ENCODE measurements at regions of chr16 and their contacts with region 1.

Region 1: GRCh38 chr16:66406534-66407221 is 20.4 kb upstream of the BEAN1 start:
- DNase-seq: peak; percentile 78
- H3K4me3 Mint-ChIP-seq: peak overlapping the region; percentile 80
- H3K27ac Mint-ChIP-seq: peak overlapping the region; percentile 38
- H3K4me1 Mint-ChIP-seq: peaks cover 17% of the 10 kb centered on the region
- H3K27me3 Mint-ChIP-seq: peaks cover 14% of the 10 kb centered on the region

Region 2: DNA sequence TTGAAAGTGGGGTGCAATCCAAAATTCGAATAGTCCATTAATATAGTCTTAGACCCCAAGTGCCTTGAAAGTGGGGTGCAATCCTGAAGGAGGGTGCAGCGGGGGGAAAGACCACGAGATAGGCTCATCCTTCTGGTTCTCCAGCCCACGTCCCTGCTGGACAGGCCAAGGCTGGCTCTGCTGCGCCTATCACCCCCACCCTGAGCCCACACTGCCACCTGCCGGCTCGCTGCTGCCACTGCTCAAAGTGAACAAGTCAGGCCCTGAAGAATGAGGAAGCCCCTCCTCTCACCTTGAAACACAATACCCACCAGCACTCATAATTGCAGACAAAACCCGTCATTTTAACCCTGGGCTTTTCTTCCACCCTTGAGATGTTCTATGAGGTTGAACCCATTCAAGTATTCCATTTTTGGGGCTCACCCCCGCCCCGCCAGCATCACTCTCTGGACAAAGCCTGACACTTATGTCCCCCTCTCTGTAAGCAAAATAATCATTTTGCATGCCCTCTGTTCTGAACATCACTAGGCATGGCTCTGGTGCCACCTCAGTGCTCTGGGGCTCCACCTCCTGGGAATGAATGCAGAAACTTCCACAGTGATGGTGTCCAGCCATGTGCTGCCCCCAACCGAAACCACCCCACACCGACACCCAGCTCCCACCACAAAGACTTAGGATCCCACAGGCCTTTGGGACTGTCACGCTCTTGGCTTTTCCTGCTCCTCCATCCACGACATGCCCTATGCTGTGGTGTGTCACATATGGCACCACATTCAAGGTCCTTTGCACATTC is 77.2 kb after region 1 on chr16:
- intact Hi-C with region 1: loop called (anchors 1 kb)
- DNase-seq: peak; percentile 58
- H3K4me3 Mint-ChIP-seq: no peak overlapping the region
- H3K27ac Mint-ChIP-seq: no peak overlapping the region
- H3K4me1 Mint-ChIP-seq: peaks cover 17% of the 10 kb centered on the region
- H3K27me3 Mint-ChIP-seq: no peaks in the 10 kb centered on the region

Region 3: DNA sequence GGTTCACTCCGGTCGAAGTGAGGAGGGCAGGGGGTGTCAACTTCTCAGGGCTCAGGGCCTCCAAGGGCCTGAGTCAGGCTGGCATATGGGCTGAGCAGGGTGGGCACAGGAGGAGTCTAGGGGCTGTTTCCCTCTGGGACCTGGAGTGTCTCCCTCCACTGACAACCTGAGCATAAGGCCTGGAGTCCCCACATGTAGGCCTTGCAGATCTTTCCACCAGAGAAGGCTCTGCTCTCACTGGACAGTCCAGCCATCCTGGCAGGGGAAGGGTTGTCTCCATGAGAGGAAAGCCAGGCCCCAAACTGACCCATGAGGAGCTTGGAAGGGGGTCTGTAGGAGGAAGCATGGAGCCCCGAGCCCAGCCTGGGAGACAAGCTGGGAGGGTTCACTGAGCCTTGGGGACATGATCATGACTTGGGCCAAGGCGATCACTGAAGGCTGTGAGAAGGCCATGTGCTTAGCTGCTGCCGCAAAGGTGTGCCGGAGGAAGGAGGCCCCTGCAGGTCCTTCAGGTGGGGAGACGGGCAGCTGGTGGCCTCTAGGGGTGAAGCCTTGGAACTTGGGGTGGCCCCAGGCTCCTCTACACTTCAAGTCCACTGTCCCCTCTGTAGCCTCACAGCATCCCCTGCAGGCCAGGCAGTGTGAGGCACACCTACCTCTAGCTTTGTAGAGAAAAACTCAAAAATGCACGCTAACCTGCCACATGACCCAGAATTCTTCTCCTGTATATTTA is 182.5 kb after region 1 on chr16:
- intact Hi-C with region 1: loop called (anchors 1 kb)
- DNase-seq: peak; percentile 55
- H3K4me3 Mint-ChIP-seq: peak overlapping the region; percentile 72
- H3K27ac Mint-ChIP-seq: peak overlapping the region; percentile 59
- H3K4me1 Mint-ChIP-seq: peaks cover 35% of the 10 kb centered on the region
- H3K27me3 Mint-ChIP-seq: no peaks in the 10 kb centered on the region

Region 4: DNA sequence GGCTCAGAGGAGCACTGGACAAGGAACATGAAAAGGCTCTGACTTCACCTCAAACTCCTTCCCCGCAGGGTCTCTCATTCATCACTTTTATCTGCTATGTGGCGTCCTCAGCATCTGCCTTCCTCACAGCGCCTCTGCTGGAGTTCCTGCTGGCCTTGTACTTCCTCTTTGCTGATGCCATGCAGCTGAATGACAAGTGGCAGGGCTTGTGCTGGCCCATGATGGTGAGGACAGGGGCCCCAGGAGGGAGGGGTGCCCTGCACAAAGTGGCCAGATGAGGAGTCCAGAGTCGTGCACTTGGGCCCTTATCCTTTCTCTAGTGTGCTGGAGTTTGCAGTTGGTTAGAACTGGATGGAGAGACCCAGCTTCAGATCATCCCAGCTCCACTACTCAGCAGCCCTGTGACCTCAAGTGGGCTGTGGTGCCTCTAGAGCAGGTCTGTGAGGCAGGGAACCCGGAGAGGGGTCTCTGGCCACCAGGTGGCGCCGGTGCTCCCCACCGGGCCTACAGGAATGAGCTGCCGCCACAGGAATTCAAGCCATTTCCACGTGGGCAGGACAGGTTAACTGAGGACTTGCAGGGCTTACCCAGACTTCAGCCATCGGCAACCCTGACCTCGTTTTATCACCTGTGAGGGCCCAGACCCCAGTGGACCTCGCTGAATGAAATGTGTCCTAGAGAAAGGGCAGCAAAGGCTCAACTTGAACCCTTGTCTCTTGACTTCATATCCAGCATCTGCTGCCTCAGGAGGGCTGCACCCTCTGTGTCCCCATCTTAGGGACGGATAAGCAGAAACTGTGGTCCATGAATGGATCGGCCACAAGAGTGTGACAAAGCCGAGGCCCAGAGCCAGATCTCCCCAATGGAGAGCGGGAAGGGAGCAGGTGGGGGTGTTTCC is 201.8 kb after region 1 on chr16:
- intact Hi-C with region 1: loop called (anchors 5 kb)
- DNase-seq: peak; percentile 72
- H3K4me3 Mint-ChIP-seq: peak overlapping the region; percentile 57
- H3K27ac Mint-ChIP-seq: peak overlapping the region; percentile 68
- H3K4me1 Mint-ChIP-seq: peaks cover 27% of the 10 kb centered on the region
- H3K27me3 Mint-ChIP-seq: no peaks in the 10 kb centered on the region

Region 5: GRCh38 chr16:66728117-66728787 is 321.6 kb after region 1 on chr16:
- intact Hi-C with region 1: loop called (anchors 5 kb)
- DNase-seq: no peak
- H3K4me3 Mint-ChIP-seq: no peak overlapping the region
- H3K27ac Mint-ChIP-seq: peak overlapping the region; percentile 15
- H3K4me1 Mint-ChIP-seq: peaks cover 1% of the 10 kb centered on the region
- H3K27me3 Mint-ChIP-seq: no peaks in the 10 kb centered on the region

Region 6: DNA sequence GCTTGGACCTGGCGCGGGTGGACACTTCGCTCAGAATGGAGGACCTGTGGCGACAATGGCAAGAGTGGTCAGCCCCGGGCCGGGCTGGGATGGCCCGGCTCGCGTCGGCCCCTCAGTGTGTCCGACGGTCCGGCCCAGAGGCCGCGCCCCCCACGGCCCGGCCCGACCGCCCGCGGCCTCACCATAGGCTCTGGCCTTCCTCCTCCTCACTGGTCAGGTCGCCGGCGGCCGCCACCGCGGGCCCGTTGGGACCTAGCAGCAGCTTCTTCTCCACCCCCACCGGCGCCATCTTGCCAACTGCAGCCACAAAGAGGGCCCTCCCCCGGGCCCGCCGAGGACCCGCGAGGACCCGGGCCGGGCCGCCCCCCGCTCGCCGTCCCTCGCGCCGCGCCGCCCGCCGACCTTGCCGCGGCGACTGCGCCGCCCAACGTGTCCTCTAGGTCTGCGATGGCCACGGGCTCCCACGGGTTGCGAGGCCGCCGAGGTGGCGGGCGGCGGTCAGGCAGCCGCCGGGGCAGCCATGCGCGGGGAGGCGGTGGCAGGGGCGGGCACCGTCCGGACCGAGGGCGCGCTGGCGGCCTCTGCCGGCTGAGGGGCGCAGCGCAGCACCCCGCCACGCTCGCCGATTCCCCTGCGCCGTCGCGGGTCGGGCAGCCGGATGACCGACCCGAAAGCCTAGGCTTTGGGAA is 344.8 kb after region 1 on chr16 and contains the start of gene DYNC1LI2:
- intact Hi-C with region 1: loop called (anchors 5 kb)
- DNase-seq: peak; percentile 76
- H3K4me3 Mint-ChIP-seq: peak within 1 kb of the TSS; percentile 85
- H3K27ac Mint-ChIP-seq: peak within 1 kb of the TSS; percentile 88
- H3K4me1 Mint-ChIP-seq: peaks cover 35% of the 10 kb centered on the region
- H3K27me3 Mint-ChIP-seq: peaks cover 26% of the 10 kb centered on the region
- total RNA-seq, gene DYNC1LI2: 54.6 and 62.7 TPM in 2 replicates

Measured in activated T-helper 2 cell treated with anti-CD3 and anti-CD28 coated beads, Interferon-gamma antibody, Interleukin-2, Interleukin-4, amounts not matched to agents 10 μg/mL and 5 μg/mL and 100 μg/mL, durations not matched to agents 14 hours and 24 hours and 36 hours (primary cell).